Activated T-helper 1 cell treated with anti-CD3 and anti-CD28 coated beads, Interleukin-12 subunit alpha, Interleukin-12 subunit beta, Interleukin-2, Interleukin-4 antibody, amounts not matched to agents 30 ng/mL and 10 ng/mL and 1 ng/mL, durations not matched to agents 14 hours and 24 hours and 36 hours (primary cell): ENCODE measurements at regions of chr11 and their contacts with region 1.

Region 1: GRCh38 chr11:87125257-87125656 is 87.5 kb downstream of the TMEM135 start:
- DNase-seq: no peak
- H3K4me3 Mint-ChIP-seq: no peak overlapping the region
- H3K27ac Mint-ChIP-seq: no peak overlapping the region
- H3K4me1 Mint-ChIP-seq: no peaks in the 10 kb centered on the region
- H3K27me3 Mint-ChIP-seq: no peaks in the 10 kb centered on the region

Region 2: GRCh38 chr11:87144252-87144651 is 19.0 kb after region 1 on chr11:
- intact Hi-C with region 1: loop called (anchors 1 kb)
- DNase-seq: no peak
- H3K4me3 Mint-ChIP-seq: no peak overlapping the region
- H3K27ac Mint-ChIP-seq: no peak overlapping the region
- H3K4me1 Mint-ChIP-seq: no peaks in the 10 kb centered on the region
- H3K27me3 Mint-ChIP-seq: no peaks in the 10 kb centered on the region

Region 3: GRCh38 chr11:88320149-88320559 is 1194.9 kb after region 1 on chr11:
- intact Hi-C with region 1: no loop called
- DNase-seq: no peak
- H3K4me3 Mint-ChIP-seq: no peak overlapping the region
- H3K27ac Mint-ChIP-seq: no peak overlapping the region
- H3K4me1 Mint-ChIP-seq: peaks cover 51% of the 10 kb centered on the region
- H3K27me3 Mint-ChIP-seq: no peaks in the 10 kb centered on the region